ENCODE measurements at regions of chr7 and their contacts with region 1.

Region 1: DNA sequence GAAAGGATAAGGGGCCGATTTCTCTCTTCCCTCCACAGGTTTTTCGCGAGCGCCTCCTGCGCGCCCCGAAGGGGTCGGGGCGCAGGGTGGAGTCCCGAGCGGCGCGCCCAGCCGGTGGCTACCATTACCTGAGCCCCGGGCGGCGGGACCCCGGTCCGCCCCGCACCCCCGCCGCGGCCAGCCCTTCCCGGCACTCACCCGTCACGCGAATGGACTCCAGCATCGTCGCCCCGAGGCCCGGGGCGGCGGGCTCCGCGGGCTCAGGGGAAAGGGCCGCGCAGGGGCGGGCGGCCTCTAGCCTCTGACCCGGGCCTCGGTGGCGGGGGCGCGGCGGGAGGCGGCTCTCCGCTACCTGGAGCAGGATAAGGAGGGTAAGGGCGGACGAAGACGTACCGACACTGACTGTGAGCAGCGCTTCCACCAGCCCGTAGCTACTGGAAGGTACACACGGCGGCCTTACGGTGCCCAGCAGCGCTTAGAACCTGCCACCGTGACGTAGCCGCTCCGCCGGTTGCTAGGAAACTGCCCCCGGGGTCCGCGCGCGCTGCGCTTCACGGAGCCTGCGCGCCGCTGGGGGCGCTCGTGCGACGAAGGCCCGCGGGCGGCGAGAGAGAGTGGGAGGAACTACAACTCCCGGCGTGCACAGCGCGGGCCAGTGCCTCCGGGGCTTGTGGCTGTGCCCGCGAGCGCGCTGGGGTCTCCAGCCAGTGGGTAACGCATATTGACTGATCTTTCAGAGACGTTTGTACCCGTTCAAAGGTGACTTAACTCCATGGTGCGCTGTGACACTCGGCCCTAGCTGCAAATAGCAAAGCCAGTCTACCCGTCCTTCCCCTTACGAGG is 22.7 kb upstream of the ANLN start:
- DNase-seq: peak; percentile 88 to 96 (median 92)
- ATAC-seq: peak; percentile 96
- H3K4me3 ChIP-seq: peak overlapping the region; percentile 65 to 73
- H3K4me3 Mint-ChIP-seq: peak overlapping the region; percentile 94
- H3K27ac ChIP-seq: peak overlapping the region; percentile 62 to 71
- H3K27ac Mint-ChIP-seq: peak overlapping the region; percentile 85
- H3K4me1 ChIP-seq: peaks cover 4% of the 10 kb centered on the region
- H3K4me1 Mint-ChIP-seq: peaks cover 6% of the 10 kb centered on the region
- H3K27me3 ChIP-seq: peaks cover 0 to 2% of the 10 kb centered on the region in 2 experiments
- H3K27me3 Mint-ChIP-seq: peaks cover 2% of the 10 kb centered on the region
- CTCF ChIP-seq: peak; percentile 91

Region 2: GRCh38 chr7:35037526-35038339 is 1329.2 kb before region 1 on chr7:
- CTCF ChIA-PET with region 1: no interaction called
- POLR2A ChIA-PET with region 1: no interaction called
- intact Hi-C with region 1: loop called (anchors 2 to 5 kb)
- DNase-seq: peak; percentile 76 to 96 (median 90)
- ATAC-seq: peak; percentile 71
- H3K4me3 ChIP-seq: peak overlapping the region; percentile 44 to 66
- H3K4me3 Mint-ChIP-seq: peak overlapping the region; percentile 89
- H3K27ac ChIP-seq: peak overlapping the region; percentile 26 to 49
- H3K27ac Mint-ChIP-seq: peak overlapping the region; percentile 80
- H3K4me1 ChIP-seq: peaks cover 25% of the 10 kb centered on the region
- H3K4me1 Mint-ChIP-seq: peaks cover 32% of the 10 kb centered on the region
- H3K27me3 ChIP-seq: no peaks in the 10 kb centered on the region
- H3K27me3 Mint-ChIP-seq: no peaks in the 10 kb centered on the region
- CTCF ChIP-seq: peak; percentile 74

Region 3: GRCh38 chr7:36152756-36153570 is 214.0 kb before region 1 on chr7 and contains the start of gene EEPD1:
- CTCF ChIA-PET with region 1: no interaction called
- POLR2A ChIA-PET with region 1: no interaction called
- intact Hi-C with region 1: loop called (anchors 1 to 5 kb)
- DNase-seq: peak; percentile 98 to 100 (median 100)
- ATAC-seq: peak; percentile 94
- H3K4me3 ChIP-seq: peak within 1 kb of the TSS; percentile 60 to 73
- H3K4me3 Mint-ChIP-seq: peak within 1 kb of the TSS; percentile 87
- H3K27ac ChIP-seq: peak within 1 kb of the TSS; percentile 35 to 54
- H3K27ac Mint-ChIP-seq: peak within 1 kb of the TSS; percentile 25
- H3K4me1 ChIP-seq: peaks cover 12% of the 10 kb centered on the region
- H3K4me1 Mint-ChIP-seq: peaks cover 24% of the 10 kb centered on the region
- H3K27me3 ChIP-seq: no peaks in the 10 kb centered on the region
- H3K27me3 Mint-ChIP-seq: no peaks in the 10 kb centered on the region
- CTCF ChIP-seq: no peak
- total RNA-seq, gene EEPD1: 0.98 to 1.1 TPM

Region 4: GRCh38 chr7:36389371-36390198 is 22.6 kb after region 1 on chr7 and contains the start of gene ANLN:
- CTCF ChIA-PET with region 1: interaction called, 17 read pairs
- POLR2A ChIA-PET with region 1: interaction called, 10 read pairs
- intact Hi-C with region 1: loop called (anchors 1 kb)
- DNase-seq: peak; percentile 67 to 93 (median 81)
- ATAC-seq: peak; percentile 94
- H3K4me3 ChIP-seq: peak within 1 kb of the TSS; percentile 76 to 80
- H3K4me3 Mint-ChIP-seq: peak within 1 kb of the TSS; percentile 84
- H3K27ac ChIP-seq: peak within 1 kb of the TSS in 1 of 2 experiments; percentile 74
- H3K27ac Mint-ChIP-seq: peak within 1 kb of the TSS; percentile 56
- H3K4me1 ChIP-seq: peaks cover 9% of the 10 kb centered on the region
- H3K4me1 Mint-ChIP-seq: peaks cover 20% of the 10 kb centered on the region
- H3K27me3 ChIP-seq: no peaks in the 10 kb centered on the region
- H3K27me3 Mint-ChIP-seq: no peaks in the 10 kb centered on the region
- CTCF ChIP-seq: no peak
- total RNA-seq, gene ANLN: 0.65 to 1.0 TPM

Region 5: DNA sequence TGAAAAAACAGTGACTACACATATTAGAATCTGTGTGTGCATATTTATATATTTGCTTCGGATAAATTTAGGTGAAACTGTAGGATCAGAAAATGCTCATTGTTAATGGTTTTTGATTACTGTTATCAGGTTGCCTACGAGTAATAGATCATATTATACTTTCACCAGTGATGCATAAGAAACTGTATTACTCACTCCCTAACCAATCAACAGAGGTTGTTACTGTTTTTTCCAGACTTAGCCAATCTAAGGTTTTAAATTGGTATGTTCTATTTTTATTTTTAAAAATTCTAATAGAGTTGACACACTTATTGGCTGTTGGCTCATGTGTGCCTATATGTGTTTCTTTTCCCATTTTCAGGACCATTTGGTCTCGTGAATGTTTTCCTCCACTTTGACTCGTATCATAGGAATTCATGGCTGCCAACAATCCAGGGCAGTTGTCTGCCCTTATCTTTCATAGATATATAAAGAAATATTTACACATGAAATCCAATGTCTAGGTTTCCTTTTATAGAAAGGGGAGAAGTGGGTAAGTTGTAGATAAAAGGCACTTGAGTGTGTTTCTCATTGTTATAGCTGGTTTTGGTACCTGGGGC is 81.9 kb after region 1 on chr7:
- CTCF ChIA-PET with region 1: no interaction called
- POLR2A ChIA-PET with region 1: no interaction called
- intact Hi-C with region 1: no loop called
- DNase-seq: no peak
- ATAC-seq: no peak
- H3K4me3 ChIP-seq: no peak overlapping the region
- H3K4me3 Mint-ChIP-seq: no peak overlapping the region
- H3K27ac ChIP-seq: no peak overlapping the region
- H3K27ac Mint-ChIP-seq: no peak overlapping the region
- H3K4me1 ChIP-seq: no peaks in the 10 kb centered on the region
- H3K4me1 Mint-ChIP-seq: no peaks in the 10 kb centered on the region
- H3K27me3 ChIP-seq: no peaks in the 10 kb centered on the region
- H3K27me3 Mint-ChIP-seq: no peaks in the 10 kb centered on the region
- CTCF ChIP-seq: no peak

Region 6: GRCh38 chr7:36670585-36671431 is 303.9 kb after region 1 on chr7:
- CTCF ChIA-PET with region 1: interaction called, 4 read pairs
- POLR2A ChIA-PET with region 1: no interaction called
- intact Hi-C with region 1: loop called in 1 of 2 experiments (anchors 10 kb)
- DNase-seq: peak; percentile 43 to 88 (median 72)
- ATAC-seq: peak; percentile 94
- H3K4me3 ChIP-seq: no peak overlapping the region
- H3K4me3 Mint-ChIP-seq: peak overlapping the region; percentile 16
- H3K27ac ChIP-seq: no peak overlapping the region
- H3K27ac Mint-ChIP-seq: peak overlapping the region; percentile 73
- H3K4me1 ChIP-seq: peaks cover 20% of the 10 kb centered on the region
- H3K4me1 Mint-ChIP-seq: peaks cover 39% of the 10 kb centered on the region
- H3K27me3 ChIP-seq: no peaks in the 10 kb centered on the region
- H3K27me3 Mint-ChIP-seq: no peaks in the 10 kb centered on the region
- CTCF ChIP-seq: peak; percentile 89

Region 7: DNA sequence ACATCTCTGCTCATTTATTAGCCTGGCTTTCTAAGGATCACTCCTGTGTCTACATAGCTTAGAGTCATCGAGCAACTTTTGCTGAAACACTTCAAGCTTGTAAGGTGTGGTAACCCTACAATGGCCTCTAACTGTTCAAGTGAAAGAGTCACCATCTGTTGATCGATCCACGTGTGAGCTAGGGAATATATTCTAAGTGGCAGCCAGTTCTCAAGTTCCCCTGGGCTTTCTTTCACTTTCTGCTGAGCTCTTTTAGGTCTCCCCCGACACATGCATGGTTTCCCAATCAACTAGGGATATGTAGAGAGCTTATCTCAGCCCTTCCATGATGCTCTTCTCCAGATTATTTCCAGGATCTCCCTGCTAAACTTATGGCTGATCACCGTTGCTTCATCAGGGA is 341.8 kb after region 1 on chr7:
- CTCF ChIA-PET with region 1: no interaction called
- POLR2A ChIA-PET with region 1: no interaction called
- intact Hi-C with region 1: no loop called
- DNase-seq: peak in 1 of 9 experiments; percentile 57
- ATAC-seq: no peak
- H3K4me3 ChIP-seq: peak overlapping the region in 1 of 2 experiments; percentile 10
- H3K4me3 Mint-ChIP-seq: no peak overlapping the region
- H3K27ac ChIP-seq: peak overlapping the region in 1 of 2 experiments; percentile 41
- H3K27ac Mint-ChIP-seq: peak overlapping the region; percentile 60
- H3K4me1 ChIP-seq: peaks cover 7% of the 10 kb centered on the region
- H3K4me1 Mint-ChIP-seq: peaks cover 63% of the 10 kb centered on the region
- H3K27me3 ChIP-seq: no peaks in the 10 kb centered on the region
- H3K27me3 Mint-ChIP-seq: no peaks in the 10 kb centered on the region
- CTCF ChIP-seq: no peak

Region 8: DNA sequence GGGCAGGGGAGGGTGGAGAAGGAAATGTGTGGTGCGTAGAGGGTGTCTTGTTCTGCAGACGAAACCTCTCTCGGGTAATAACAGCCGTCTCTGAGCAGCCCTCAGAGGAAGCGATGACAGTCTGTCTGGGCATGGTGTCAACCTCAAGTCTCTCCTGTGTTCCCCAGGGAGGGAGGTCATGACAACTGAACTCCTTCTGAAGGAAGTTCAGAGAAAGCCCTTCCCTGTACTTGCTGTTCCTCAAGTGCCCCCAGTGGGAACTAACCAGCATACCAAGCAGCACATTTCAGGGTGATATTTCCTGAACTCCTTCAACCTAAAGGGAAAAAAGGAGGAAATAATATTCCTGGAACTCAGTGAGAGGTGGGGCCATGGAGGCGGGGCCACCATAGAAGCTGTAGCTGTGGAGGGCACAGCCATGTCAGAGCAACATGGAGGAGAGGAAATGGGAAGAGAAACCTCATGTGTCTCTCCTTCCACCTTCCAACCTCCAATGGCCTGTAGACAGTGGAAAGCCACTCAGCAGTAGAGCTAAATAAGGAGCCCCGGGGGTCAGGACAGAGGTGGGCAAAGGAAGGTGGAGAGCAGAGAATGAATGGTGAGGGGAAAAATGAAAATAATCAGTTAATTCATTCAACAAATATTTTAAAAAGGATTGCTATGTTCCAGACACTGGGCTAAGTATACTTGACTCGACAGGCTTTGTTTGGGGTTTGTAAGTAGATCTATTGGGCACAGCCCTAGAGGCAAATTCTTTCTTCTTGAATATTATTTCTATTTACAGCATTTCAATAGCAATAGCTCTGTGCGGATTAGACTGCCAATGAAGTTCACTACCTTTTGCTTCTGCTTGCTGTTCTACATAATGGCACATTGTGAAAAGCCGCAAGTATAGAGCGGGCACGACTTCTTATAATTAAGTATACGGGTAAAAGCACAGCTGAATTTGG is 418.3 kb after region 1 on chr7:
- CTCF ChIA-PET with region 1: no interaction called
- POLR2A ChIA-PET with region 1: no interaction called
- intact Hi-C with region 1: loop called in 1 of 2 experiments (anchors 10 kb)
- DNase-seq: peak; percentile 55 to 97 (median 76)
- ATAC-seq: peak; percentile 76
- H3K4me3 ChIP-seq: peak overlapping the region in 1 of 2 experiments; percentile 5
- H3K4me3 Mint-ChIP-seq: peak overlapping the region; percentile 46
- H3K27ac ChIP-seq: peak overlapping the region; percentile 67 to 87
- H3K27ac Mint-ChIP-seq: peak overlapping the region; percentile 99
- H3K4me1 ChIP-seq: peaks cover 84% of the 10 kb centered on the region
- H3K4me1 Mint-ChIP-seq: peaks cover 89% of the 10 kb centered on the region
- H3K27me3 ChIP-seq: no peaks in the 10 kb centered on the region
- H3K27me3 Mint-ChIP-seq: no peaks in the 10 kb centered on the region
- CTCF ChIP-seq: no peak

Measured in CD8-positive, alpha-beta T cell (primary cell).